Endothelial cell of umbilical vein (primary cell): ENCODE measurements at regions of chr6 and their contacts with region 1.

Region 1: GRCh38 chr6:30942338-30943060 is 1.7 kb downstream of the MUCL3 start:
- DNase-seq: peak; percentile 56
- H3K4me3 ChIP-seq: no peak overlapping the region
- H3K27ac ChIP-seq: no peak overlapping the region
- H3K4me1 ChIP-seq: no peaks in the 10 kb centered on the region
- H3K27me3 ChIP-seq: peaks cover 6 to 16% of the 10 kb centered on the region in 2 experiments
- CTCF ChIP-seq: peak; percentile 55
- POLR2A ChIP-seq: no peak

Region 2: GRCh38 chr6:30955367-30956042 is 13.0 kb after region 1 on chr6:
- CTCF ChIA-PET with region 1: interaction called, 16 read pairs
- POLR2A ChIA-PET with region 1: no interaction called
- dilution Hi-C with region 1: no loop called
- intact Hi-C with region 1: no loop called
- DNase-seq: no peak
- H3K4me3 ChIP-seq: peak overlapping the region in 2 of 3 experiments; percentile 22 to 45
- H3K27ac ChIP-seq: no peak overlapping the region
- H3K4me1 ChIP-seq: peaks cover 5% of the 10 kb centered on the region
- H3K27me3 ChIP-seq: peaks cover 50 to 53% of the 10 kb centered on the region in 2 experiments
- CTCF ChIP-seq: no peak
- POLR2A ChIP-seq: no peak

Region 3: DNA sequence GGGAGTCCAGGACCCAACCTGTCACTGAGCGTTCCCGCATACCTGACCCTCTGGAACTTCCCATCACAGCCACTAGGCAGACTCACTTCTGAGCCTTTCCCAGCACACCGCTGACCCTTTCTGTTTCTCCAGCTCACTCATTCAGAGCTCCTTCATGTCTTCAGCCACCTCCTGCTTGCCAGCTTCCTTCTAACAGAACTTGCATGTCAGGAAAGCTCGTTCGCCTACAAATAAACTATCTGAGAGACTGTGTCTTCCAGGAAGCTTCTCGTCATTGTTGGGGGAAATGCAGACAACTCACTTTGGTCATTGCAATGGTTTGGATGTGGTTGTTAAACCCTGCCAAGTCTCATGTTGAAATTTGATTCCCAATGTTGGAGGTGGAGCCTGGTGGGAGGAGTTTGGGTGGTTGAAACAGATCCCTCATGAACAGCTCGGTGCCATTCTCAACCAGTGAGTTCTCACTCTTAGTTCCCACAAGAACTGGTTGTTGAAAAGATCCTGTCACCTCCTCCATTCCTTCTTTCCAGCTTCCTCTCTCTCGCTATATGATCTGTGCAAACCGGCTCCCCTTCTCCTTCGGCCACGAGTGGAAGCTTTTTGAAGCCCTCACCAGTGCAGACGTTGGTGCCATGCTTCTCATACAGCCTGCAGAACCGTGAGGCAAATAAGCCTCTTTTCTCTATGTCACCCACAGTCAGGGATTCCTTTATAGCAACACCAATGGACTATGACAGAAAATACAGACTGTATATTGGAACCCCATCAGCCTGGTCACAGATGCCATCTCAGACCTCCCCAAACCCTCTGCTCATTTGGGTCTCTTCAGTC is 39.7 kb after region 1 on chr6:
- CTCF ChIA-PET with region 1: no interaction called
- POLR2A ChIA-PET with region 1: no interaction called
- dilution Hi-C with region 1: no loop called
- intact Hi-C with region 1: no loop called
- DNase-seq: peak; percentile 43
- H3K4me3 ChIP-seq: no peak overlapping the region
- H3K27ac ChIP-seq: no peak overlapping the region
- H3K4me1 ChIP-seq: no peaks in the 10 kb centered on the region
- H3K27me3 ChIP-seq: peaks cover 14 to 16% of the 10 kb centered on the region in 2 experiments
- CTCF ChIP-seq: peak in 1 of 2 donors; percentile 11
- POLR2A ChIP-seq: no peak

Region 4: GRCh38 chr6:31042806-31043205 is 100.3 kb after region 1 on chr6:
- CTCF ChIA-PET with region 1: interaction called, 4 read pairs
- POLR2A ChIA-PET with region 1: no interaction called
- dilution Hi-C with region 1: no loop called
- intact Hi-C with region 1: loop called (anchors 1 kb)
- DNase-seq: peak; percentile 38
- H3K4me3 ChIP-seq: no peak overlapping the region
- H3K27ac ChIP-seq: no peak overlapping the region
- H3K4me1 ChIP-seq: no peaks in the 10 kb centered on the region
- H3K27me3 ChIP-seq: peaks cover 8 to 12% of the 10 kb centered on the region in 2 experiments
- CTCF ChIP-seq: peak; percentile 23 to 69
- POLR2A ChIP-seq: no peak

Region 5: DNA sequence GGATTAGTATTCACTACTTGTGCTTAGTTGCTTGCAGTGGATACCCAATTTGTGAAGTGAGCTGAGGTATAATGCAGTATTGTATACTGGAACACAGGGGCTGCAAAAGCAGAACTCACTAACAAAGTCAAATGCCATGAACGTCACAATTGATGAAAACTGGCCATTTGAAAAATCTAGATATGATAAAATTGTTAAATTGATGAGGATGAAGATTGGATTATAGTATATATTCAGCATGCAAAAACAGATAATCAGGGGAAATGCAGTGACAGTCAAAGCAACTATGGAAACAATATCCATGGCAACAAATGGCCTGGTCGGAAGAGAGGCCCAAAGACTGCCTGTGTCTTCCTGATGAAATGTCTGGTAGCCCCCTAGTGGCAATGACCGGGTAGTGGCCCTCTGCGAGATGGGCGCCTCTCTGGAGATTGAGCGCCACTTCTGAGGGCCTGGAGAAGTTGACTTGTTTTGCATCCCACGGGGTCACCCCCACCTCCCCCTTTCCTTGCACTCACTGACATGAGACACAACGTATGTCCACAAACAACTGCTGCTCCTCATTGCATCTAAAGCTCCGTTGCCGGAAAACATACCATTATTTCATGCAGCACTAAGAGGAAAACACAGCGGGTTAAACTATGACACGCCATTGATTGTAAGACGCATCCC is 126.3 kb after region 1 on chr6:
- CTCF ChIA-PET with region 1: interaction called, 37 read pairs
- POLR2A ChIA-PET with region 1: no interaction called
- dilution Hi-C with region 1: no loop called
- intact Hi-C with region 1: loop called (anchors 1 kb)
- DNase-seq: peak; percentile 73
- H3K4me3 ChIP-seq: no peak overlapping the region
- H3K27ac ChIP-seq: no peak overlapping the region
- H3K4me1 ChIP-seq: peaks cover 6% of the 10 kb centered on the region
- H3K27me3 ChIP-seq: peaks cover 5 to 8% of the 10 kb centered on the region in 2 experiments
- CTCF ChIP-seq: peak; percentile 82 to 91
- POLR2A ChIP-seq: no peak

Region 6: DNA sequence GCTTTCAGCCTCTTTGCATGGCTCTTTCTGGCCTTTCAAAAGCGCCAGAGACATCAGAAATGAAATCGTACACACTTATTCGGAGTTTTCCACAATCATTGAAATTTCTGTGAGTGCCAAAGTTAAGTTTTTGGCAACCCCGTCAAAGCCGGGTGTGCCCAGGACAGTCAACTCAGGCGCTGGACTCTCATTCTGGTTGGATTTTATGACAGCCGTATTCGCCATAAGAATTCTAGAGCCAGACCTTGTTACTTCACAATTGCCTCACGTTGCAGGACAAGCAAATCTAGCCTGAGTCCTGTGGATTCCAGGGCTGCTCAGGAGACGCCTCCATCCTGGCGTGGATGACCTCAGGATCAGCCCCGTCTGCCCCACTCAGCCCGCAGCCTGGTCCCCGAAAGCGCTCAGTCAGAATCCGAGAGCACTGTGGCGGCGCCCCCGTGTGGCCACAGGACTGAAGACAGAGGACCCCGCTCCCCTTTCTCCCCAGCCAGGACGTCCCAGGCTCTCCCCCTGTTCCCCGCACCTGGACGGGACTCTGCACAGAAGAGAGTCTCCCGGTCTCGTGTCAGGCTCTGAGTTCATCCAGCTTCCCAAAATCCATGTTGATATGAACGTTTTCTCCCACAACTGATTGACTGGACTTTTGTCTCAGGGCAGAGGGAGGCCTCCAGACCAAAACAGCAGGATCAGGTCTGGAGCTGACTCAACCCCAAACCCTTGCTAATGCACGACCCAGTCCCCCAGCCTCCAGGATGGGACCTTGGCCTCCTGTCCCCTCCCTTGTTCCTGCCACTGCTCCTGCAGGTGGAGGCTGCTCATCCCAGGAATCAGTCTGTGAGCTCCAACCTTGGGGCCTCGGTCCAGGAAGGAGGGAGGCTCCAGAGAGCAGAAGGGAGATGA is 499.1 kb after region 1 on chr6:
- CTCF ChIA-PET with region 1: no interaction called
- POLR2A ChIA-PET with region 1: no interaction called
- dilution Hi-C with region 1: no loop called
- intact Hi-C with region 1: no loop called
- DNase-seq: peak; percentile 56
- H3K4me3 ChIP-seq: no peak overlapping the region
- H3K27ac ChIP-seq: no peak overlapping the region
- H3K4me1 ChIP-seq: no peaks in the 10 kb centered on the region
- H3K27me3 ChIP-seq: peaks cover 22 to 40% of the 10 kb centered on the region in 2 experiments
- CTCF ChIP-seq: peak; percentile 85 to 90
- POLR2A ChIP-seq: no peak